ENCODE measurements at regions of chr16 and their contacts with region 1.

Region 1: DNA sequence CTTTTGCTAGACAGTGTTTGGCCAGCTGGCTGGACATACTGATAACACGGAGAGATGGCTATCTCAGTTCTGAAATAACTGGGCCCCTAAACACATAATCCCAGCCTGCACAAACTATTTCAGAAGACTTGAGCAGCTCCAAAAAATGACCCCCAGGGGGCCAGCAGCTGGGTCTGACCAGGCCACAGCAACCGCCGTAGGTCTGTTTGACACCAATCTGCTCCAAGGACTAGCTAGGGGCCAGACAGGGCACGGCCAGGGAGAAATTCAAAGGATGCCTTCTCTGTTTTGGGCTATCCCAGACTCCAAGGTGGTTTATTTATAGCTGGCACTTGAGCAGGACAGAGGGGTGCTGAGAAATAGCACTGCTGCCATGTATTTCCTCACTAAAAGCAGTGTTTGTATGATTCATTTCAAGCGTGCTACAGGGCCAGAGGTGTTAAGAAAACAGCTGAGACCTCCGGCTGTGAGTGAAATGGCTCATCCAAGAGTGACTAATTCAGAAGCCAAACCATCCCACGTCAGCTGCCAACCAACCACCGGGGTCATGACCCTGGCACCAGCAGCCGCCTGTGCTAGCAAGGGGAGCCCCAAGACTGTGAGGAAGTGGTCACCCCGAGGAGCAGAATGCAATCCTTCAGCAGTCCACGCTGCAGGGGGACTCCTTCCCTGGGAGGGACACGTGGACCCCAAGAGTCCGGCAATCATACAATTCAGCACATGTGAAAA is 5.7 kb downstream of the GGA2 start:
- DNase-seq: peak; percentile 34
- H3K4me3 ChIP-seq: peak overlapping the region; percentile 99
- H3K27ac ChIP-seq: peak overlapping the region; percentile 91
- H3K4me1 ChIP-seq: peaks cover 77% of the 10 kb centered on the region
- CTCF ChIP-seq: peak; percentile 34; the same call in 1 of the 2 replicates

Region 2: DNA sequence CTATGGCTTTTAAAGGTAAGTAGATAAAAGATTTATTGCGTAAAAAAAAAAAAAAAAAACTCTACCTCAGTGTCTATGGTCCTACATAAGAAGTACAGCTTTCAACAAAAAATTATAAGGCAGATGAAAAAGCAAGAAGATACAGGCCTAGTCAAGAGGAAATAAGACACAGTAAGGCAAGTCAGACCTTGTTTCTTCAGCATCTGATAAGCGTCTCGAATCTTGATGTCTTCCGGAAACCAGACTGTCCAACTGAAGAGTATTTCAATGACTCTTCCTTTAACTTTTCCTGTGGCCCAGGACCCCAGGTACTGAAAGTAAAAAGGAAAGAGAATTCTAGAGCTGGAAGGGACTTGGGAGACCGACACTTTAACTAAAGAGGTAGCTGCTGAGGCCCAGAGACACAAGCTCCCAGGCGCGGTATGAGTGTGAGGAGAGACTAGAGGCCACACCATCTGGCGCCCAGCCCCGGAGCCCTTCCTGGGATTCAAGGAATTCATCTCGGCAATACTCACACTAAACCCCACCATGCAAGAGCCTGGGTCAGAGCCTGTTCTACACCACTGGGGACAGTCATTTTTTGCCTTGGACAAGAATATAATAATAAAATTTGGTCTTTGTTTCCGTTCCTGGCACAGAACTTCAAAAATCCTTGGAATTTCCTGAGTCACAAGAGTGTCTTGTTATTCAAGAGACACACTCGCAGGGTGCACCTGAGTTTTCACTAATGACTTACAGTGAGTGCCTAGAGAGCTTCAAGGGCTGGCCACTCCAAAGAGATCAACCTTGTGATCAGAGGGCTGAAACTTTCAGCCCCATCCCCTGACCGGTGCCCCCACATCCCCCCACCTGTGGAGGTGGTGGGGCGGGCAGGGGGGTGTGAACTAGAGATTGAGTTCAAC is 12.9 kb before region 1 on chr16:
- CTCF ChIA-PET with region 1: interaction called, 4 read pairs
- POLR2A ChIA-PET with region 1: no interaction called
- intact Hi-C with region 1: loop called (anchors 2 kb)
- DNase-seq: no peak
- H3K4me3 ChIP-seq: no peak overlapping the region
- H3K27ac ChIP-seq: no peak overlapping the region
- H3K4me1 ChIP-seq: peaks cover 6% of the 10 kb centered on the region
- CTCF ChIP-seq: no peak

Region 3: DNA sequence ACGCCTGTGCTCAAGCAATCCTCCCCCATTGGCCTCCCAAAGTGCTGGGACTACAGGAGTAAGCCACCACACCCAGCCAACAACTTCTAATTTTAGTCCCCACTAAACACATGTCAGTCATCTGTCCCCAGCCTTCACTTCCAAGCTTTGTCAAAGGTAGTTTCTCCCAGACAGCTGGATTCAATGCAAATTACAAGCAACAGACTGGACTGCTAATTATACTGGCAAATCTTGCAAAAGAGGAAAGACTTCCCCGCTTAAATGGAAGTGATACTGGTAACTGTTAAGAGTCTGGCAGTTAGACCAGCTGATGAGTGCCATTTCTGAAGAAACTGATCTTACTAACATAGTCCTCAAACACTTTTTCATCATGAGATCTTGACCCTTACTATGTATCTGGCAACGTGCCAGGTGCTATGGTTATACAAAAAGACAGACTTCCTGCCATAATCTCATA is 13.8 kb after region 1 on chr16:
- CTCF ChIA-PET with region 1: no interaction called
- POLR2A ChIA-PET with region 1: interaction called, 31 read pairs
- intact Hi-C with region 1: no loop called
- DNase-seq: peak; percentile 96
- H3K4me3 ChIP-seq: peak overlapping the region; percentile 33
- H3K27ac ChIP-seq: peak overlapping the region; percentile 100
- H3K4me1 ChIP-seq: peaks cover 92% of the 10 kb centered on the region
- CTCF ChIP-seq: no peak

Region 4: GRCh38 chr16:24036614-24037013 is 532.0 kb after region 1 on chr16:
- CTCF ChIA-PET with region 1: no interaction called
- POLR2A ChIA-PET with region 1: no interaction called
- intact Hi-C with region 1: no loop called
- DNase-seq: peak; percentile 55
- H3K4me3 ChIP-seq: no peak overlapping the region
- H3K27ac ChIP-seq: no peak overlapping the region
- H3K4me1 ChIP-seq: no peaks in the 10 kb centered on the region
- CTCF ChIP-seq: peak; percentile 81

Measured in OCI-LY7 (cell line).